ENCODE measurements at regions of chr1 and their contacts with region 1.

Region 1: DNA sequence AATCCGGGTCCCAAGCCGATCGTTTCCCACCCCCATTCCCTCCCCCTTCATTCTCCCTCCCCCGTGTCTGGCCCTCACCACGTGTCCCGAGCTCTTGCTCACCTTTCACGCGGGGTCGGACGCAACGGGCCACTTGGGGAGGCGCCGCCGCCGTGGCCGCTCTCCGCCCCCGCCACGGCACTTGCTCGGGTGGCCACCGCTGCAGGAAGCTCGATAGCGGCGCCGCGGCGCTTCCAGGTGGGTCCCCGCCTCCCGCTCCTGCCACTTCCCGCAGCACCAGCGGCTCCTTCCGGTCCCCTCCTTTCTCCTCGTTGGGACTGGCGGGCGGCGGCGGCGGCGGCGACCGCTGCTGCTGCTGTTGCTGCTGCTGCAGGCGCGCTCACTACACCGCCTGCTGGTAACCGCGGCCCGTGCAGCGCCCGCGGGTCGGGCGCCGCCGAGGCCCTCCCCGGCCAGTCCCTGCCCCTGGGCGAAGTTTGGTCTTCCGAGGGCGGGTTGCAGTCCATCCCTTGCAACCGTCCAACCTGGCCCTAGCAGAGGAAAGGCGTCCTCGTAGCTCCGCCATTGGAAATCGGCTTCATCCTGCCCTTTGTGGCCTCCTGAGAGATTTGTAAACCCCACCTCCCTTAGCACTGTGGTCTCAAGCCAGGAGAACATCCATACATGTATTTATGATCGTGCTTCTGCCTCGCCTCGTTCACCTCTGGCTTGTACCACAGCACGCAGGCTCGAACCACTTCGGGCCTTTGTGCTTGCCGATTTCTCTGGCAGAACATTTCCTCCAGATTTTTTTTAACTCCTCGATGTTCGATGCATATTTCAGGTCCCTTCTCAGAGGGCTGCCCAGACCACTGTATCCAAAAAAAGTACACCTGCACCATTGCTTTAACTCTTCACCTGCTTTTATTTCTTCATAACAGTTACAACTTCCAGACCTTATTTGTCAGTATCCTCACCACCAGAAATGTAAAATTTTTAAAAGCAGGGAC is 996 bp upstream of the ZZZ3 start:
- DNase-seq: peak; percentile 90
- ATAC-seq: peak; percentile 79
- H3K4me3 Mint-ChIP-seq: peak overlapping the region; percentile 91
- H3K27ac Mint-ChIP-seq: peak overlapping the region; percentile 96
- H3K4me1 Mint-ChIP-seq: peaks cover 39% of the 10 kb centered on the region
- H3K27me3 Mint-ChIP-seq: no peaks in the 10 kb centered on the region
- CTCF ChIP-seq: peak; percentile 71

Region 2: GRCh38 chr1:75785983-75786853 is 1897.2 kb before region 1 on chr1 and contains the start of gene RABGGTB:
- CTCF ChIA-PET with region 1: no interaction called
- POLR2A ChIA-PET with region 1: interaction called, 16 read pairs
- intact Hi-C with region 1: loop called (anchors 1 kb)
- DNase-seq: peak; percentile 89
- ATAC-seq: peak; percentile 92
- H3K4me3 Mint-ChIP-seq: peak within 1 kb of the TSS; percentile 98
- H3K27ac Mint-ChIP-seq: peak within 1 kb of the TSS; percentile 97
- H3K4me1 Mint-ChIP-seq: peaks cover 65% of the 10 kb centered on the region
- H3K27me3 Mint-ChIP-seq: no peaks in the 10 kb centered on the region
- CTCF ChIP-seq: no peak
- total RNA-seq, gene RABGGTB: 203 and 234 TPM in 2 replicates

Region 3: GRCh38 chr1:77143529-77144121 is 539.8 kb before region 1 on chr1:
- CTCF ChIA-PET with region 1: no interaction called
- POLR2A ChIA-PET with region 1: no interaction called
- intact Hi-C with region 1: loop called (anchors 1 kb)
- DNase-seq: no peak
- ATAC-seq: no peak
- H3K4me3 Mint-ChIP-seq: no peak overlapping the region
- H3K27ac Mint-ChIP-seq: no peak overlapping the region
- H3K4me1 Mint-ChIP-seq: no peaks in the 10 kb centered on the region
- H3K27me3 Mint-ChIP-seq: no peaks in the 10 kb centered on the region
- CTCF ChIP-seq: no peak

Region 4: DNA sequence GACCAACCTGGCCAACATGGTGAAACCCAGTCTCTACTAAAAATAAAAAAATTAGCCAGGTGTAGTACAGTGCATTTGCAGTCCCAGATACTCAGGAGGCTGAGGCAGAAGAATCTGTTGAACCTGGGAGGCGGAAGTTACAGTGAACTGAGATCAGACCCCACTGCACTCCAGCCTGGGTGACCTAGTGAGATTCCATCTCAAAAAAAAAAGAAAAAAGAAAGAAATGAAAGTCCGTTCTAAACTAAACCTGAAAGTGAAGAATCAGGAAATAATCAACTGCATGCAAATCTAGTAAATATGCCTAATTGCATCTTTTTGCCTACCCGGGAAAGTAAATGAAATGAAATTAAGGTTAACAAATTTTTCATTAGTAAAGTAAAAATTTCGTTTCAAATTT is 100.5 kb before region 1 on chr1:
- CTCF ChIA-PET with region 1: no interaction called
- POLR2A ChIA-PET with region 1: interaction called, 5 read pairs
- intact Hi-C with region 1: loop called (anchors 5 kb)
- DNase-seq: no peak
- ATAC-seq: no peak
- H3K4me3 Mint-ChIP-seq: no peak overlapping the region
- H3K27ac Mint-ChIP-seq: no peak overlapping the region
- H3K4me1 Mint-ChIP-seq: peaks cover 8% of the 10 kb centered on the region
- H3K27me3 Mint-ChIP-seq: no peaks in the 10 kb centered on the region
- CTCF ChIP-seq: no peak

Region 5: GRCh38 chr1:77661696-77662095 is 21.8 kb before region 1 on chr1:
- CTCF ChIA-PET with region 1: no interaction called
- POLR2A ChIA-PET with region 1: no interaction called
- intact Hi-C with region 1: no loop called
- DNase-seq: no peak
- ATAC-seq: no peak
- H3K4me3 Mint-ChIP-seq: no peak overlapping the region
- H3K27ac Mint-ChIP-seq: no peak overlapping the region
- H3K4me1 Mint-ChIP-seq: peaks cover 24% of the 10 kb centered on the region
- H3K27me3 Mint-ChIP-seq: no peaks in the 10 kb centered on the region
- CTCF ChIP-seq: no peak

Region 6: GRCh38 chr1:77978969-77979876 is 295.8 kb after region 1 on chr1 and contains the start of gene FUBP1:
- CTCF ChIA-PET with region 1: no interaction called
- POLR2A ChIA-PET with region 1: interaction called, 33 read pairs
- intact Hi-C with region 1: loop called (anchors 1 kb)
- DNase-seq: peak; percentile 81
- ATAC-seq: peak; percentile 74
- H3K4me3 Mint-ChIP-seq: no peak within 1 kb of the TSS
- H3K27ac Mint-ChIP-seq: no peak within 1 kb of the TSS
- H3K4me1 Mint-ChIP-seq: peaks cover 31% of the 10 kb centered on the region
- H3K27me3 Mint-ChIP-seq: no peaks in the 10 kb centered on the region
- CTCF ChIP-seq: no peak
- total RNA-seq, gene FUBP1: 259 and 282 TPM in 2 replicates

Measured in activated B cell treated with CpG ODN at 0.5 μM for 24 hours (primary cell).